ENCODE measurements at regions of chr16 and their contacts with region 1.

Region 1: GRCh38 chr16:8958344-8959167 is 5.2 kb downstream of the USP7 start:
- DNase-seq: no peak
- H3K4me3 Mint-ChIP-seq: peak overlapping the region; percentile 69
- H3K27ac Mint-ChIP-seq: peak overlapping the region; percentile 77
- H3K4me1 Mint-ChIP-seq: peaks cover 67% of the 10 kb centered on the region
- H3K27me3 Mint-ChIP-seq: no peaks in the 10 kb centered on the region

Region 2: DNA sequence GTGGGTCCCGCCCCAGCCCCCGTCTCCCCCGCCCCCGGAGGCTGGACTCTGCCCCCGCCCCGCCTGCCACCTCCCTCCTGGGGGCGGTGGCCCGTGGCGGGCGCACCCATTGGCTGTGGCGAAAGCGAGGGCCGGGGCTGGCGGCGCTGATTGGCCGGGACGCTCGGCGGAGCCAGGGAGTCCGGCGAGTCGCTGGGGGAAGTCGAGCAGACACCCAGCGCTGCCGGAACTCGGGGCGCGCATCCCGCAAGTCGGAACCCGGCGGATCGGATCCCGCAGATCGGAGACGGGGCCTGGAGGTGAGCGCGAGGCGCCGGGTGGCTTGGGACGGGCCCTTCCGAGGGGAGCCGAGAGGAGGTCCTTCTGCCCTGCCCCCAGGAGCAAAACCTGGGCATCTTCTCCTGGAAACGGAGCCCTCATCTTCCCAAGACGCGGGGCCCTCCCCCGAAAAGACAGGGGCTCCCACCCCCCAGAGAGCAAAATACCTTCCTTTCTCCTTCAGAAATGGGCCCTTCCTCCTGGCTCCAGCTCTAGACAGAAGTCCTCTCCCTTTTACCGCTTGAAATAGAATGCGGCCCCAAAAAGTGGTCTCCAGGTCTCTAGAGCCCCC is 284.0 kb before region 1 on chr16 and contains the start of gene ABAT:
- intact Hi-C with region 1: loop called (anchors 2 kb)
- DNase-seq: peak; percentile 91
- H3K4me3 Mint-ChIP-seq: peak within 1 kb of the TSS; percentile 87
- H3K27ac Mint-ChIP-seq: peak within 1 kb of the TSS; percentile 81
- H3K4me1 Mint-ChIP-seq: peaks cover 20% of the 10 kb centered on the region
- H3K27me3 Mint-ChIP-seq: peaks cover 6% of the 10 kb centered on the region
- total RNA-seq, gene ABAT: 7.3 and 7.7 TPM in 2 replicates

Region 3: GRCh38 chr16:8920645-8921346 is 37.8 kb before region 1 on chr16:
- intact Hi-C with region 1: loop called (anchors 2 kb)
- DNase-seq: no peak
- H3K4me3 Mint-ChIP-seq: peak overlapping the region; percentile 7
- H3K27ac Mint-ChIP-seq: peak overlapping the region; percentile 73
- H3K4me1 Mint-ChIP-seq: peaks cover 60% of the 10 kb centered on the region
- H3K27me3 Mint-ChIP-seq: no peaks in the 10 kb centered on the region

Region 4: GRCh38 chr16:8943966-8944759 is 14.4 kb before region 1 on chr16:
- intact Hi-C with region 1: loop called (anchors 2 kb)
- DNase-seq: no peak
- H3K4me3 Mint-ChIP-seq: peak overlapping the region; percentile 51
- H3K27ac Mint-ChIP-seq: peak overlapping the region; percentile 5
- H3K4me1 Mint-ChIP-seq: peaks cover 54% of the 10 kb centered on the region
- H3K27me3 Mint-ChIP-seq: no peaks in the 10 kb centered on the region

Region 5: GRCh38 chr16:9102379-9102778 is 143.8 kb after region 1 on chr16:
- intact Hi-C with region 1: no loop called
- DNase-seq: no peak
- H3K4me3 Mint-ChIP-seq: no peak overlapping the region
- H3K27ac Mint-ChIP-seq: peak overlapping the region; percentile 18
- H3K4me1 Mint-ChIP-seq: peaks cover 87% of the 10 kb centered on the region
- H3K27me3 Mint-ChIP-seq: no peaks in the 10 kb centered on the region

Measured in activated T-helper 1 cell treated with anti-CD3 and anti-CD28 coated beads, Interleukin-12 subunit alpha, Interleukin-12 subunit beta, Interleukin-2, Interleukin-4 antibody, amounts not matched to agents 30 ng/mL and 10 ng/mL and 1 ng/mL, durations not matched to agents 14 hours and 24 hours and 36 hours (primary cell).